ENCODE measurements at regions of chr15 and their contacts with region 1.

Region 1: DNA sequence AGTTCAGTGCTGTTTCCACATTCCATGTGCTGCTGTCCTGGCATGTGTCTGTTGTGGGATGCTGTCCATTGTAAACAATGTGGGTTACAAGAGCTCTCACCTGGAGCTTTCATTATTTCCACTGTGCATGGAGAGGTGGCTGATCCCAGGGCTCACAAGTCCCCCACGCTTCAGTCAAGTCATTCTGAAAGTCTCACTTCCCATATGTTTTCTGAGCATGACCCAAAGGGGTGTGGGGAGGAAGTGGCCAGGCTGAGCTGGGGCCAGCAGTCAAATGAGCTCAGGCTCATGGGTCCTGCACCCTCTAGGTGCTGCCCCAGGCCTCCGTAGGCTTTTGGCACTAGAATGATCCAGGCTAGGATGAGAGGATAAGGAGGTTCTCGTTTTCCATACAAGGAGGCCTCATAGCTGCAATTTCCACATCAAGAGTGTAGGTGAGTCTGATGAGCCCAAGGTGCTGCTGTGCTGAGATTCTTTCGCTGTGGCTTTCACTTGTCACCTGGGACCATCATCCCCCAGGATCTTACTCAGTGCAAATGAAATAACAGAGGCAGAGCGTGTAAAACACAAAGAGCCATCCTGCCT is 22.0 kb downstream of the STARD5 start:
- DNase-seq: no peak
- H3K4me3 ChIP-seq: peak overlapping the region; percentile 85
- H3K4me3 Mint-ChIP-seq: peak overlapping the region; percentile 96 to 100 (median 99)
- H3K27ac ChIP-seq: no peak overlapping the region
- H3K27ac Mint-ChIP-seq: peak overlapping the region; percentile 90 to 100 (median 97)
- H3K4me1 ChIP-seq: peaks cover 64% of the 10 kb centered on the region
- H3K4me1 Mint-ChIP-seq: peaks cover 65 to 66% (median 66%) of the 10 kb centered on the region in 3 donors
- H3K27me3 ChIP-seq: no peaks in the 10 kb centered on the region
- H3K27me3 Mint-ChIP-seq: no peaks in the 10 kb centered on the region

Region 2: DNA sequence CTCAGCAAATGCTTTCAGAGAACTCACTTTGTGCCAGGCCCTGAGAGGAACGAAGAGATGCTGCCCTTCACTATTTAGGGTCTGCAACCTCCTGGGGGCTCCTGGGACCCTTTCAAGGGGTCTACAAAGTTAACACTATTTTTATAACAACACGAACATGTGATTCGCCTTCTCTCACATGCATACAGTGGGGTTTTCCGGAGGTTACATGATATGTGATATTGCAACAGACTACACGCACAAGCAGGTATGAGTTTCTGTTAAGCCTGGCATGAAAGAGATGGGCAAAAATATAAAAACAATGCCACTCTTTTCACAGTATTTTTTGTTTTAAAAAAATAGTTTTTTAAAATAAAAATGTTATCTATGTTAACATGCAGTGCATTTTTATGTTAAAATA is 11.8 kb after region 1 on chr15:
- CTCF ChIA-PET with region 1: interaction called, 11 read pairs
- POLR2A ChIA-PET with region 1: interaction called, 17 read pairs
- DNase-seq: no peak
- H3K4me3 ChIP-seq: no peak overlapping the region
- H3K4me3 Mint-ChIP-seq: no peak overlapping the region
- H3K27ac ChIP-seq: no peak overlapping the region
- H3K27ac Mint-ChIP-seq: peak overlapping the region in 5 of 8 donors; percentile 57 to 99 (median 97)
- H3K4me1 ChIP-seq: peaks cover 49% of the 10 kb centered on the region
- H3K4me1 Mint-ChIP-seq: peaks cover 61 to 88% (median 71%) of the 10 kb centered on the region in 3 donors
- H3K27me3 ChIP-seq: no peaks in the 10 kb centered on the region
- H3K27me3 Mint-ChIP-seq: no peaks in the 10 kb centered on the region

Region 3: DNA sequence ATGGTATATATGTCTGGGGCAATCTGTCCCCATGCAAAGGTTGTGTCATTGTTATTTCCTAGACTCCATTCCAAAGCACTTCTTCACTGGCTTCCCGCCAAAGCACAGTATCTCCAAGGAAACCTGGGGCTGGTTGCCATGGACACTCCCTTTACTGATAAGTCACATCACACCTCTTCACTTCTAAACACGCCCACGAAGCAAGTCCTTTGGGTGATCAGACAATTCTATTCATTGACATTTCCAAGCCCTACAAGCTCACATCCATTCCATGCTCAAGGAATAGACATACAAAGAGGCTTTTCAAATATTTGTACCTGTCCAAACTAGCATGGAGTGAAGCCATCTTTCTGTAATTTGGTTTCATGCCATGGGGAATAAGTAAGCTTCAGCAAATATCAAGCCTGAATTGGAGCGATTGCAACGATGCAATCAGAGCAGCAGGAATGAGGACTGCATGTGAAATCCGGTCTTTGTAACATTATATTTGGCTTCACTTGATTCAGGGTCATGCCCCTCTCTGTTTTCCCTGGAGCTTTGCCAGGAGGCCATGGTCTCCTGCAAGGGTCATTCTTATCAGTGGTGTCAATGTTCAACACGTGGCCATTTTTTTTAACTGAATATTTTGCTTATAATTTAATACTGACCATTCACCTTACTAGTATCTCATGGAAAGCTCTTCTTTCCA is 273.7 kb after region 1 on chr15:
- CTCF ChIA-PET with region 1: no interaction called
- POLR2A ChIA-PET with region 1: no interaction called
- DNase-seq: no peak
- H3K4me3 ChIP-seq: no peak overlapping the region
- H3K4me3 Mint-ChIP-seq: no peak overlapping the region
- H3K27ac ChIP-seq: no peak overlapping the region
- H3K27ac Mint-ChIP-seq: no peak overlapping the region
- H3K4me1 ChIP-seq: no peaks in the 10 kb centered on the region
- H3K4me1 Mint-ChIP-seq: no peaks in the 10 kb centered on the region
- H3K27me3 ChIP-seq: no peaks in the 10 kb centered on the region
- H3K27me3 Mint-ChIP-seq: peaks cover 5 to 32% of the 10 kb centered on the region in 2 donors